Naive thymus-derived CD4-positive, alpha-beta T cell (primary cell): ENCODE measurements at regions of chr2 and their contacts with region 1.

Region 1: DNA sequence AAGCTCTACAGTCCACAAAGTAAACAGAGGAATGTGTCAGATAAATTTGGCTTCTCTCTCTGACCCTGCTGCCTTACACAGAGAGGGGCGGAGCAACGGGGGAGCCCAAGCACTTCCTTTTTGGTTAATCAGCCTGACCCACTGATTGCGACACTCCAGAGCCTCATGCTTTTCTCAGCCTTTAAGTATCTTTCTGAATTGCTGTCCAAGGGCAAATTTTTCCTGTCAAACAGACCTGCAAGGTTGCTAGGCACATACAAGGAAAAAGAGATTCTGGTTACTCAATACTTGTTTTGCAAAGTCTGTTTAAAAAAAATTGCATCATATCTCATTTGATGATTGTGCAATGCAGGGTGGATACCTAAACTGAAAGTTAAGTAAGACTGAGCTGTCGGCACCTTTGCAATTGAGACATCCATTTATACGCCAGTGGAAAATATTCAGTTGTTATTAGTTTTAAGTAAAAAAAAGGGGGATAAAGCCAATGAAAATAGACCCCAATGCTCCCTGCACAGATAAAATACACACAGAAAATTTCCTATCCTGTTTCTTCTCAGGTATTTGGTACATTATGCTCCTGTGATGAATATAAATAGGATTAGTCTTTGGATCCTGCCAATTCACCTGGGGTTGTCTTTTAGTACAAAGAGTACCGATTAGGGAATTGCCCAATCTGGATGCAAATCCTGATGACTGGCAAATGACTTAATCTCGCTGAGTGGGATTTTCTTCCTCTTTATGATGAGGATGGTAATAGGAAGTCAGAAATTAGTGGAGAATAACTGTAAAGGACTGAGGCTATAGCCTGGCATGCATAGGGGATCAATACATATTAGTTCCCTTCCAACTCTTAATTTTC is 260.2 kb upstream of the TRIB2 start:
- DNase-seq: peak; percentile 23 to 52 (median 41)
- ATAC-seq: peak; percentile 88
- H3K4me3 ChIP-seq: peak overlapping the region; percentile 50
- H3K4me3 Mint-ChIP-seq: peak overlapping the region; percentile 66 to 89 (median 79)
- H3K27ac ChIP-seq: peak overlapping the region; percentile 59
- H3K27ac Mint-ChIP-seq: peak overlapping the region; percentile 82 to 99 (median 91)
- H3K4me1 ChIP-seq: peaks cover 15 to 20% of the 10 kb centered on the region in 2 donors
- H3K4me1 Mint-ChIP-seq: peaks cover 29 to 57% (median 39%) of the 10 kb centered on the region in 7 donors
- H3K27me3 ChIP-seq: no peaks in the 10 kb centered on the region
- H3K27me3 Mint-ChIP-seq: no peaks in the 10 kb centered on the region

Region 2: GRCh38 chr2:12430407-12431133 is 26.0 kb before region 1 on chr2:
- CTCF ChIA-PET with region 1: interaction called, 4 read pairs
- POLR2A ChIA-PET with region 1: no interaction called
- intact Hi-C with region 1: loop called in 1 of 2 experiments (anchors 2 kb)
- DNase-seq: peak in 6 of 9 donors; percentile 10 to 28 (median 20)
- ATAC-seq: peak; percentile 87
- H3K4me3 ChIP-seq: peak overlapping the region; percentile 47
- H3K4me3 Mint-ChIP-seq: peak overlapping the region; percentile 31 to 83 (median 77)
- H3K27ac ChIP-seq: peak overlapping the region; percentile 22
- H3K27ac Mint-ChIP-seq: peak overlapping the region; percentile 60 to 91 (median 82)
- H3K4me1 ChIP-seq: peaks cover 0 to 12% of the 10 kb centered on the region in 2 donors
- H3K4me1 Mint-ChIP-seq: peaks cover 25 to 70% (median 49%) of the 10 kb centered on the region in 7 donors
- H3K27me3 ChIP-seq: no peaks in the 10 kb centered on the region
- H3K27me3 Mint-ChIP-seq: no peaks in the 10 kb centered on the region

Region 3: GRCh38 chr2:12435430-12436222 is 20.9 kb before region 1 on chr2:
- CTCF ChIA-PET with region 1: interaction called, 4 read pairs
- POLR2A ChIA-PET with region 1: interaction called, 4 read pairs
- intact Hi-C with region 1: loop called (anchors 2 kb)
- DNase-seq: no peak
- ATAC-seq: no peak
- H3K4me3 ChIP-seq: no peak overlapping the region
- H3K4me3 Mint-ChIP-seq: peak overlapping the region in 8 of 10 donors; percentile 10 to 50 (median 28)
- H3K27ac ChIP-seq: no peak overlapping the region
- H3K27ac Mint-ChIP-seq: peak overlapping the region in 2 of 9 donors; percentile 29 to 46
- H3K4me1 ChIP-seq: peaks cover 0 to 29% of the 10 kb centered on the region in 2 donors
- H3K4me1 Mint-ChIP-seq: peaks cover 14 to 57% (median 38%) of the 10 kb centered on the region in 7 donors
- H3K27me3 ChIP-seq: no peaks in the 10 kb centered on the region
- H3K27me3 Mint-ChIP-seq: no peaks in the 10 kb centered on the region

Region 4: GRCh38 chr2:12486205-12487118 is 29.9 kb after region 1 on chr2:
- CTCF ChIA-PET with region 1: no interaction called
- POLR2A ChIA-PET with region 1: interaction called, 4 read pairs
- intact Hi-C with region 1: loop called (anchors 2 kb)
- DNase-seq: no peak
- ATAC-seq: no peak
- H3K4me3 ChIP-seq: no peak overlapping the region
- H3K4me3 Mint-ChIP-seq: peak overlapping the region in 9 of 10 donors; percentile 22 to 84 (median 75)
- H3K27ac ChIP-seq: peak overlapping the region; percentile 42
- H3K27ac Mint-ChIP-seq: peak overlapping the region in 8 of 9 donors; percentile 83 to 97 (median 92)
- H3K4me1 ChIP-seq: peaks cover 28 to 63% of the 10 kb centered on the region in 2 donors
- H3K4me1 Mint-ChIP-seq: peaks cover 50 to 80% (median 70%) of the 10 kb centered on the region in 7 donors
- H3K27me3 ChIP-seq: no peaks in the 10 kb centered on the region
- H3K27me3 Mint-ChIP-seq: no peaks in the 10 kb centered on the region

Region 5: DNA sequence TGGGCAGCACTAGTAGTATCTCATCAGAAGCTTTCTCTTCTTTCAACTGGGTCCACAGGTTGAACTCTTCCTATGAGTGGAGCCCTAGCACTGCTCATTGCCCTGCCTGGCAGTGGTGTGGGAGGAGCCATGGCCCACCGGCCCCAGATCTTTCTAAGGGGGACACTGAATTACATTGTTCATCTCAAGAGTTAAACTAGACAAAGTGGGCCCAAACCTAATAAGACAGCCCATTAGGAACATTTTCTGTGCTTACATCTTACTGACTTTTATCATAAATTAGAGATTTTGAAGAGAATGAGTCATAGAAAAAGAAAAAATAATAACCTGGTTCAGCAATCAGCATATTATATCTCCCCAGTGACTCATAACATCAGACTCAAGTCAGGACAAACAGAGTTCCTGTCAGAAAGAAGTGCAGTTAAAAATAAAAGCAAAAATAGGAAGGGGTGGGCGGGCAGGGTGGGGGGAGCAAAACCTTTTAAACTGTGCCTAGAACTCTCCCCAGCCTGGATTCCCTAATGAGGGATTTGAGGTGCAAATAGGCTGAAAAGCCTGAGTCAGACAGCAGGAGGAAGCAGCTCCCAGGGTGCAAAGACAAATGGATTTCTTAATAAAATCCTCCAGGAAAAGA is 98.6 kb after region 1 on chr2:
- CTCF ChIA-PET with region 1: interaction called, 4 read pairs
- POLR2A ChIA-PET with region 1: no interaction called
- intact Hi-C with region 1: loop called in 1 of 2 experiments (anchors 5 kb)
- DNase-seq: peak in 1 of 9 donors; percentile 32
- ATAC-seq: peak; percentile 27
- H3K4me3 ChIP-seq: no peak overlapping the region
- H3K4me3 Mint-ChIP-seq: peak overlapping the region in 7 of 10 donors; percentile 5 to 66 (median 26)
- H3K27ac ChIP-seq: no peak overlapping the region
- H3K27ac Mint-ChIP-seq: peak overlapping the region in 8 of 9 donors; percentile 36 to 89 (median 74)
- H3K4me1 ChIP-seq: peaks cover 8 to 26% of the 10 kb centered on the region in 2 donors
- H3K4me1 Mint-ChIP-seq: peaks cover 25 to 62% (median 43%) of the 10 kb centered on the region in 7 donors
- H3K27me3 ChIP-seq: no peaks in the 10 kb centered on the region
- H3K27me3 Mint-ChIP-seq: no peaks in the 10 kb centered on the region